HepG2 (cell line): ENCODE measurements at regions of chr5 and their contacts with region 1.

Region 1: GRCh38 chr5:116652196-116652729 is 77.6 kb upstream of the SEMA6A start:
- DNase-seq: peak; percentile 97
- ATAC-seq: peak; percentile 100
- H3K4me3 ChIP-seq: peak overlapping the region in 1 of 3 experiments; percentile 19; a peak in 1 of 6 replicates
- H3K27ac ChIP-seq: no peak overlapping the region
- H3K4me1 ChIP-seq: peaks cover 28% of the 10 kb centered on the region
- H3K27me3 ChIP-seq: no peaks in the 10 kb centered on the region; a peak in 1 of 5 replicates
- CTCF ChIP-seq: no peak
- EP300 ChIP-seq: peak; percentile 25 to 78; a peak in 2 of 4 replicates
- POLR2A ChIP-seq: no peak
- RAD21 ChIP-seq: no peak

Region 2: DNA sequence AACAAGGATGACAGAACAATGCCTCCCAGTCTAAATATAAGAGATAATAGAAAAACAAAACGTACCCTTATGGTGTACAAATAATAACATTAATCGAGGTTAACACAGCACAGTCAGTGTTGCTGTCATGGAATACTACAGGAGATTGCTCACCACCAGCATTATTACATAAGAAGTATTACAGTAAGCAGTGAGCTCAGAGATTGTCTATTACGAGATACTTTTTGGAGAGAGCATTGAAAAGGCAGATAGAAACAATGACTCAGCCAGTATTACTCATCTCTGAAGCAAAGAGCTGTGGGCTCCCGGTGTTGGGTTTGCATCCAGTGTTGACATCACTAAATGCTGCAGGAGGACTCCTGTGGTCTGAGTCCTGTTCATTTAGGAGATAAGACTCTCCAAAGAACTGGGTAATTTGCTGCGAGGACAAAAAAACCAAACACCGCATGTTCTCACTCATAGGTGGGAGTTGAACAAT is 114.2 kb after region 1 on chr5:
- CTCF ChIA-PET with region 1: no interaction called
- POLR2A ChIA-PET with region 1: no interaction called
- in situ Hi-C with region 1: no loop called
- intact Hi-C with region 1: loop called (anchors 10 kb)
- DNase-seq: peak; percentile 86
- ATAC-seq: peak; percentile 67
- H3K4me3 ChIP-seq: peak overlapping the region in 1 of 3 experiments; percentile 23; a peak in 1 of 6 replicates
- H3K27ac ChIP-seq: no peak overlapping the region
- H3K4me1 ChIP-seq: peaks cover 81% of the 10 kb centered on the region
- H3K27me3 ChIP-seq: no peaks in the 10 kb centered on the region
- CTCF ChIP-seq: no peak
- EP300 ChIP-seq: peak in 1 of 2 experiments; percentile 56; a peak in 1 of 4 replicates
- POLR2A ChIP-seq: no peak
- RAD21 ChIP-seq: no peak